Left ventricle myocardium inferior (tissue), 1 donor: ENCODE measurements at regions of chr11 and their contacts with region 1.

Region 1: DNA sequence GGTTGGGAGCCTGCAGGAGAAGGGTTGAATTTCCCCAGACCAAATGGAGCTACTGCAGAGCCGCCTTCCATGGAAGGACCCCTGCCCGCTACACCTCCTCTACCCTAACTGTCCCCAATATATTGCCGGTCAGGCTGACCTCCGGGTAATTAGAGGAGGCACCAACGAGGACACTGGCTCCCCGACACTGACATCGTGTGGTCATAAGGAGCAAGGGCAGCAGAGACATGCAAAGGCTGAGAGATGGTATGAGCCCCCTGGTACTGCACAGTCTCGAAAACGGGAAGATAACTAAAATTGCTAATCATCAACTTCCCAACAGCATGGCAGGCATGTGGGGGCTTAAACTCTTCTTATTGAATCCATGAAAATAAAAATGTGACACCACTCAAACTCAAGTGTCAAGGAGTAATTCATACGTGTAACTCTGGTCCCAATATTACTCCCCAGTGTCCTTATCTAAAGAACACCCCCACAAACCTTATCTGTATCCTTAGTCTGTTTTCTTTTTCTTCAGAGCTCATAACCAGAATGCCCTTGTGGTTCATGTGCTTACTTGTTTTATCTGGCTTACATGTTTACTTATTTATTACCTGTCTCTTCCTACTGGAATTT is 4.4 kb downstream of the CAVIN3 start:
- DNase-seq: peak; percentile 54
- H3K4me3 ChIP-seq: peak overlapping the region; percentile 42
- H3K27ac ChIP-seq: peak overlapping the region; percentile 100
- H3K4me1 ChIP-seq: peaks cover 50% of the 10 kb centered on the region
- H3K27me3 ChIP-seq: no peaks in the 10 kb centered on the region
- CTCF ChIP-seq: peak; percentile 94

Region 2: DNA sequence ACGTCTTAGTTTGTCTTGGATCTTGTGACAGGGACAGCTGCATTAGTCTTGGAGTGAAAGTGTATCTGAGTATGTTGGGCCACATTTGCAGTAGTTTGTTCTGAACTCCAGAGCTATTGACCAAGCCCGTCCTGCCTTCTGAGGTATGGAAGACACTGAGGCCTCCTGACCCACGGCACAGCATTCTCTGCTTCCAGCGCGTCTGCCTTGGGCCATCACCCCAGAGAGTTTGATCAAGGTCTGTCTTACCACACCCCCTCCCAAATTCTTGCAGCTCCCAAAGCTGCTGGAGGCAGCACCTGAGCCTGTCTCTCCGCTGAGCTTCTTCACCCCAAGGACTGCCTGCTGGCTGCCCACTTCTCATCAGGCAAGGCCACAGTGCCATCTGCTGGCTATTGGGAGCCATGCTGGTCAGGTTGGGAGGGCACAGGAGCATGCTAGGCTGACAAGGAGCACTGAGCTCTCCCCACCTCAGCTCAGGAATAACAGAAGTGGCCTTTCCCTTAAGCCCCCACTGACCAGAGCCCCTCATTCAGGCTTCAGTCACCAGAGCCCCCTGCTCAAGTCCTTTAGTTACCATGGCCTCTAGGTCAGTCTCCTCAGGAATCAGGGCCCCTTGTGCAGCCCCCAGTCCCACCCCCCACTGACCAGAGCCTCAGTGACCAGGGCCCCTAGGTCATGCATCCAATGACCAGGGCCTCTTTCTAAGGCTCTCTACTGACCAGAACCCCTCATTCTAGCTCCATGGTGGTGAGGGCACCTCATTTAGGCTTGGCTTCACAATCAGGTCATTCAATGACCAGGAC is 47.2 kb after region 1 on chr11:
- intact Hi-C with region 1: loop called (anchors 2 kb)
- DNase-seq: peak; percentile 81
- H3K4me3 ChIP-seq: peak overlapping the region; percentile 43
- H3K27ac ChIP-seq: peak overlapping the region; percentile 89
- H3K4me1 ChIP-seq: peaks cover 12% of the 10 kb centered on the region
- H3K27me3 ChIP-seq: no peaks in the 10 kb centered on the region
- CTCF ChIP-seq: peak; percentile 93